GM10248 (cell line): ENCODE measurements at regions of chr11 and their contacts with region 1.

Region 1: GRCh38 chr11:128318856-128319474 is 268.4 kb downstream of the ETS1 start:
- DNase-seq: peak; percentile 56
- CTCF ChIP-seq: no peak

Region 2: GRCh38 chr11:128261011-128261421 is 57.9 kb before region 1 on chr11:
- CTCF ChIA-PET with region 1: no interaction called
- POLR2A ChIA-PET with region 1: no interaction called
- DNase-seq: no peak
- CTCF ChIP-seq: no peak

Region 3: GRCh38 chr11:128279866-128280265 is 39.1 kb before region 1 on chr11:
- CTCF ChIA-PET with region 1: no interaction called
- POLR2A ChIA-PET with region 1: no interaction called
- DNase-seq: no peak
- CTCF ChIP-seq: no peak

Region 4: GRCh38 chr11:128290106-128290840 is 28.7 kb before region 1 on chr11:
- CTCF ChIA-PET with region 1: interaction called, 16 read pairs
- POLR2A ChIA-PET with region 1: no interaction called
- DNase-seq: peak; percentile 77
- CTCF ChIP-seq: peak; percentile 67

Region 5: DNA sequence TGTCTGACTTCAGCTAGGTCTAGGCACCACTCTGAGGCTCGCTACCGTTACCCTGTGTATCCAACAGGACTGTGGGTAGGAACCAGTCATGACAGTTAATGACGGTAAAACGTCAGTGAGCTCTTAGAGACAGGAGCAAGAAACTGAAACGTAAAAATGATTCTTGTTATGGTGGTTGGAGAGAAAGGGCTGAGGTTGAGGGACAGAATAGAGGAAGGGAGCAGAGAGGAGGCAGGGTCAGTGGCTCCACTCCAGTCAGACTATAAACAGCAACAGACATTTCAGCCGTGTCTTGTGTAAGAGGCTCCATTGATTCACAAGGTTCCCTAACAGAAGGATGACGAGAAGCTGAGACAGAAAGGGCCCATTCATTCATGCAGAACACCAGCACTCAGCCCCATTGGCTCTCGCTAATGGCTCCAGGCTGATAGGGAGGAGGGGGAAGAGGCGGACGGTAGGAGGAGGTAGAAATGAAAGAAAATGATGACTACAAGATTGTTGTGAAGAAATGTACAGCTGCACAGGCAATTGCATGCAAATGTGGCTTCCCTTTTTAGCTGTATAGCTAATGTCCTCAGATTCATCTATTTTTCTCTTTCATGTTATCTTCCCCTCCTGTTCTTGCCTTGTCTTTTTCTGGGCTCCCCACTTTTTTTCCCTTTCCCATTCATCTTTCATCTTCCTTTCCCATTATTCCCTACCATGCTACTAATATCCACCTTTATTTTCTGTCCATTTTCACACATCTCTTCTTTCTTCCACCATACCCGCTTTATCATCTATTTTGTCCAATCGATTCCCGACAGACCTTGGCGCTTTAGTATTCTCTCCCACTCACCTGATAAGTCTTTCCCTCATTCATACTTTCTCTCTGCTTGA is 234.1 kb after region 1 on chr11:
- CTCF ChIA-PET with region 1: no interaction called
- POLR2A ChIA-PET with region 1: no interaction called
- DNase-seq: peak; percentile 80
- CTCF ChIP-seq: no peak